ENCODE measurements at regions of chr4 and their contacts with region 1.

Region 1: DNA sequence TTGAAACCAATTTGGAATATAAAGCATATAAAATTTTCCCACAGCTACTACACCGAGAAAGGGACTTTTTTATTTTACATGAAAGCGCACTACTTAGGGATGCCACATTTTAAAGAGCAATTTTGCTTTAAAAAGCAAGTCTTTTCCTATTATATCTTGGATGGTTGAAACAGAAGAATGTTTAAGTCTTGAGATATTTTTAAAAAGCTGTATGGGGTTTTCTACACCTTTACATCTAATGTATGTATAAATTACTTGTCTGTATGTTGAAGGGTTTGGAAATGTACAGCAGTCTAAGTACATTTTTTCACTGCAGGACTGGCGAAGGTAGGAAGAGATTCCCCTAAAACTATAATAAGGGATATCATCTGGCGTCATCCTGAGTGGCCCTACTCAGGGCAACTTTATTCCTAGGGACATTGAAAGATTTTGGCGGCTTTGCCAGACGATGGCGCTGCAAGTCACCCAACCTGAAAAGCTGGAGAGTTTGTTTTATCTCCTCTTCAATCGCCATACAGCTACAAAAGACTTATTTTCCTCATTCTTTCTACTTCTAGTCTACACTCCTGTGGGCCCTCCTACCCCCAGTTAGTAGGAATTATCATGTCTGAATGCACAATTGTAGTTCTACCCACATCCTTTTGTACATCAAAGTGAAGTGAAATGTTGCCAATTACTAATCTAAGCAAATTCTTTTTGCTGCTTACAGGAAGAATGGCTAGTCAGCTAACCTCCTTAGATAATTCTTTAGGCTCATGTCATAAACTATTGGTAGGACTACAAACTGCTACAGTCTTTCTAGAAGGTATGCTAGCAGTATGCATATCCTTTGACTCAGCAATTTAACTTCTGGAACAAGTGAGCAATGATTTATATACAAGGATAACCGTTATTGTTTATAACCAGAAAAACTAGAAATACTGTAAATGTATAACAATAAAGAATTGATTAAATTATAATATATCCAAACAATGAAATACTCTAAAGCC is 782 bp upstream of the NEK1 start:
- DNase-seq: peak; percentile 82
- ATAC-seq: peak; percentile 30
- H3K4me3 Mint-ChIP-seq: peak overlapping the region; percentile 92
- H3K27ac Mint-ChIP-seq: peak overlapping the region; percentile 97
- H3K4me1 Mint-ChIP-seq: peaks cover 50% of the 10 kb centered on the region
- H3K27me3 Mint-ChIP-seq: no peaks in the 10 kb centered on the region

Region 2: GRCh38 chr4:168318266-168318895 is 1294.8 kb before region 1 on chr4 and contains the start of gene DDX60:
- CTCF ChIA-PET with region 1: no interaction called
- POLR2A ChIA-PET with region 1: no interaction called
- intact Hi-C with region 1: loop called in 1 of 2 experiments (anchors 2 kb)
- DNase-seq: peak; percentile 91
- ATAC-seq: peak; percentile 93
- H3K4me3 Mint-ChIP-seq: peak within 1 kb of the TSS; percentile 85
- H3K27ac Mint-ChIP-seq: peak within 1 kb of the TSS; percentile 92
- H3K4me1 Mint-ChIP-seq: peaks cover 44% of the 10 kb centered on the region
- H3K27me3 Mint-ChIP-seq: no peaks in the 10 kb centered on the region
- total RNA-seq, gene DDX60: 22.2 to 23.8 TPM

Region 3: GRCh38 chr4:168514249-168514852 is 1098.8 kb before region 1 on chr4:
- CTCF ChIA-PET with region 1: no interaction called
- POLR2A ChIA-PET with region 1: no interaction called
- intact Hi-C with region 1: no loop called
- DNase-seq: no peak
- ATAC-seq: no peak
- H3K4me3 Mint-ChIP-seq: no peak overlapping the region
- H3K27ac Mint-ChIP-seq: no peak overlapping the region
- H3K4me1 Mint-ChIP-seq: peaks cover 33% of the 10 kb centered on the region
- H3K27me3 Mint-ChIP-seq: no peaks in the 10 kb centered on the region

Region 4: GRCh38 chr4:169010125-169011023 is 602.8 kb before region 1 on chr4 and contains the start of gene CBR4:
- CTCF ChIA-PET with region 1: no interaction called
- POLR2A ChIA-PET with region 1: no interaction called
- intact Hi-C with region 1: loop called (anchors 1 to 5 kb)
- DNase-seq: peak; percentile 97
- ATAC-seq: peak; percentile 99
- H3K4me3 Mint-ChIP-seq: peak within 1 kb of the TSS; percentile 84
- H3K27ac Mint-ChIP-seq: peak within 1 kb of the TSS; percentile 87
- H3K4me1 Mint-ChIP-seq: peaks cover 26% of the 10 kb centered on the region
- H3K27me3 Mint-ChIP-seq: no peaks in the 10 kb centered on the region
- total RNA-seq, gene CBR4: 14.4 to 23.7 TPM

Region 5: DNA sequence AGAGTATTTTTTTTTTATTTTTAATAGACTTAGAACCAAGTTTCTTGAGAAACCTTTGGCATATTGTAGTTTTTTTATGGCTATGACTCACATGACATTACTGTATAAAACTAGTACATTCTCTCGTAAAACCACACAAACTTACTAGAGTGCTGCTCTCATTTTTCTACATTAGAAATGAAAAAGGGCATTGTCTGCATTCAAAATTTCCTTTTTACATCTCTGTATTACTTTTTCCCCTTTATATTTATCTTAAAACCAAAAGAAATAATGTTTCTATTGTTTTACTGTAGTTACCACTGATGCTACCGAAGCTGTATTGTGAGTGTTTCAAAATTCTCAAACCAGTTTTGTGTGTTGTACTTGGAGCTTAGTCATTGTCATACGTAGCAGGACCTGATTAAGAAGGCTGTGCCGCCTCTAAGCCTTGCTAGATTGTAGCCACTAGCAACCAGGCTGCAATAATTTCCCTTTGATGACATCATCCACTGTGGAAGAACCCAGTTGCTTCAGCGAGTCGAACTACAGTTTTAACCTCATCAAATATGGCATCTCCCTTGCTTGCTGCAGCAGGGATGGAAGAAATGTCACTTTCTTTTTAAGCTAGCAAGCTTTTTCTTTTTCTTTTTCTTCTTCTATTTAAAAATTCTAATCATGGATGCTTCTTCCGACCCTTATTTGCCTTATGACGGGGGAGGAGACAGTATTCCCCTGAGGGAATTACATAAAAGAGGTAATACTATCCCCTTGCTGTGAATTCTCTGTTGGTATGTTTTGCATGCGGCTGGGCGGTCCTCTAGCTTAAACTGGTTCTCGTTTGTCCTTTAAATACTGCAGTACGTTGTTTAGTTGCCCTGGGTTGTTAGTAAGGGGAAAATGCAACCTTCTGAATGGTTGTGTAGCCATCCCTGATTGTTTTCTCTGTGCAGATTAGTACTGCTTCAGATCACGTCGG is 46.8 kb after region 1 on chr4:
- CTCF ChIA-PET with region 1: interaction called, 30 read pairs
- POLR2A ChIA-PET with region 1: interaction called, 6 read pairs
- intact Hi-C with region 1: loop called (anchors 1 to 2 kb)
- DNase-seq: peak; percentile 83
- ATAC-seq: peak; percentile 99
- H3K4me3 Mint-ChIP-seq: peak overlapping the region; percentile 80
- H3K27ac Mint-ChIP-seq: peak overlapping the region; percentile 98
- H3K4me1 Mint-ChIP-seq: peaks cover 37% of the 10 kb centered on the region
- H3K27me3 Mint-ChIP-seq: no peaks in the 10 kb centered on the region

Region 6: DNA sequence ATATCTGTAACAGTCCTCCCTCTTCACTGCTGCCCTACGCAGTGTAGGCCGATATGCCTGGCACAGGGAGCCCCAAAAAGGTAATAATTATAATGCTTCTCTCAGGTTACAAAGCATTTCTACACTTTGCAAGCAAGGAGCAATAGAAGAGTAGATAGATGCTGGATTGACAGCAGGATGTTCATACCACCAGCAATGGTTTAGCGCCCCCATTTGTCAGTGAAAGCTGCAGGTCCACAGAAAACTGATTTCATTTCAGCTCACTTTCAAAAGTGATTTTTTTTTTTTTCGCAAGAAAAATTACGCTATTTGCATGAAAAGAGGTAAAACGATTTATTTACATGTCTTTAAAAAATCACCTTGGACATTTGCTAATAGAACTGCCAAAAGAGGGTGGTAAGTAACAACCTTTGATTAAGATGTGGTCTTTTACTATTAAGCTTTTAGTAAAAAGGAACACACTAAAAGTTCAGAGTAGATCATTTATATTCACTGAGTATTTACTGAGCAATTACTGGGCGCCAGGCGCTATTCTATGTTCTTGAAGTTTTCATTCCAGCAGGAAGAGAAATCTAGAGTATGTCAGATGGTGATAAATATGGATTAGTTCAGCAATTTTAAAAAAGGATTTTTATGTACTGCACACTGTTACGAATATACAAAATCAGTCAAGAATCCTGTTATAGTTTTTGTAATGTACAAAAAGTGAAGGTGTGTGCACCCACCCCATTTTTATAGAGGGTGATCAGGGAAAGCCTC is 110.2 kb after region 1 on chr4:
- CTCF ChIA-PET with region 1: interaction called, 4 read pairs
- POLR2A ChIA-PET with region 1: no interaction called
- intact Hi-C with region 1: loop called (anchors 2 kb)
- DNase-seq: peak; percentile 20
- ATAC-seq: no peak
- H3K4me3 Mint-ChIP-seq: no peak overlapping the region
- H3K27ac Mint-ChIP-seq: no peak overlapping the region
- H3K4me1 Mint-ChIP-seq: peaks cover 11% of the 10 kb centered on the region
- H3K27me3 Mint-ChIP-seq: no peaks in the 10 kb centered on the region

Region 7: DNA sequence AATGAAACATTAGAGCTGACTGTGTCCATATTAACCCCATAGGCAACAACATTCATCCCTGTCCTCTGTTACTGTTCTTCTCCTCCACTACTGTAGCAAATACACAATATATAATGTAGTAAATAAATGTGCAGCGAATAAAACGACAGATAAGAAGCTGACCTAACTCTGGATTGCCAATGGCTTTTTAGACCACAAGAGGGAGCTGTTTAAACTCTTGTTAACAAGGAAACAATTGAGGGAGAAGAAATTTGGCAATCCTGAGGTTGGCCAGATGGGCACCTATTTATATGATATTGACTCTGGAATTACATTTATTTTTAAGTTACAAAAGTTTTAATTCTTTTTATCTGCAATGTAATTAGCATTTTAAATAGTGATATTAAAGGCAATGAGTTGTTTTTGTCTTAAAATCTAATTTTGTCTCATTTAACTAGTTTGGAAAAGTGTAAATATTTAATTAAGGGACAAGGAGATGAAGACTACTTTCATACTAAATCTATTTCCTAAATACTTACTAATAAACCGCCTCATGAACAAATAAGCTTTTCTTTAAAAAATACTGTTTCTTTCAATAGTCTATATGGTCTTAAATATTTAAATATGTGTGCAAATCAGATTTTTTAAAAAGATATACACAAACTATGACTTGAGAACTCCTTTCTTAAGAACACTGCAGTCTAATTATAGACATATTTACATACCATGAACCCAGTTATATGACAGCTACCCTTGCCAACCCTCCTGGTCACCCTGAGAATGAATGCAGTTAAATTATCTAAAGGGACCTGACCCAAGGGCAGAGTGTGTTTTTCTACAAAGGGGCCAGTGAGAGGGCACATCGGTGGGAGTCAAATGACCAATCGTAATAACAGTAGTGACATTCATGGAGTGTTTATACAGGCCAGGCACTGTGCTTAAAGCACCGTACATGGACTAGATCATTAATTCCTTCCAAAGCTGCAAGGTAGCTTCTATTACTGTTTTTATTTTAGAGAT is 197.5 kb after region 1 on chr4:
- CTCF ChIA-PET with region 1: interaction called, 12 read pairs
- POLR2A ChIA-PET with region 1: no interaction called
- intact Hi-C with region 1: no loop called
- DNase-seq: peak; percentile 6
- ATAC-seq: no peak
- H3K4me3 Mint-ChIP-seq: no peak overlapping the region
- H3K27ac Mint-ChIP-seq: no peak overlapping the region
- H3K4me1 Mint-ChIP-seq: no peaks in the 10 kb centered on the region
- H3K27me3 Mint-ChIP-seq: peaks cover 3% of the 10 kb centered on the region

Region 8: GRCh38 chr4:170047771-170048354 is 434.7 kb after region 1 on chr4:
- CTCF ChIA-PET with region 1: interaction called, 3 read pairs
- POLR2A ChIA-PET with region 1: no interaction called
- intact Hi-C with region 1: loop called (anchors 5 kb)
- DNase-seq: peak; percentile 75
- ATAC-seq: no peak
- H3K4me3 Mint-ChIP-seq: no peak overlapping the region
- H3K27ac Mint-ChIP-seq: no peak overlapping the region
- H3K4me1 Mint-ChIP-seq: no peaks in the 10 kb centered on the region
- H3K27me3 Mint-ChIP-seq: no peaks in the 10 kb centered on the region

Region 9: DNA sequence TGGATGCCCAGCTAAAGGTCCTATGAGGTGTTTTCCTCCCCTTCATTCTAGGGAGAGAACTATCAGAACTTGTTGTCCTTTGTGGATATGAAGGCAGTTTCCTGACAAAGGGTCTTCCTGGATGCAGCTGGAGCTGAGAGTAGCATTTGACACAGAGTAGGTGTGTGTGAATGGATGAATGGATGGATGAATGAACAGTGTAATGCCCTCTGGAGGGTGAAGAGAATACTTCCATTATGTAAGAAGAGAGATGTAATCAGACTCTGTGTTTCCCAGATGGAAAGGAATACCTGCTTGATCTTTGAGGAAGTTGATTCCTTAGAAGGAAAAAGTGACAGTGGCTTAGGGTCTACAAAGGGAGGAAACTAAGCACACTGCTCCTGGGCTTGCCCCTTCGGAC is 532.0 kb after region 1 on chr4:
- CTCF ChIA-PET with region 1: no interaction called
- POLR2A ChIA-PET with region 1: no interaction called
- intact Hi-C with region 1: no loop called
- DNase-seq: no peak
- ATAC-seq: no peak
- H3K4me3 Mint-ChIP-seq: no peak overlapping the region
- H3K27ac Mint-ChIP-seq: no peak overlapping the region
- H3K4me1 Mint-ChIP-seq: no peaks in the 10 kb centered on the region
- H3K27me3 Mint-ChIP-seq: peaks cover 2% of the 10 kb centered on the region